Left ventricle myocardium superior (tissue), 1 donor: ENCODE measurements at regions of chr6 and their contacts with region 1.

Region 1: GRCh38 chr6:142155895-142156757 is 9.1 kb downstream of the VTA1 start:
- DNase-seq: no peak
- ATAC-seq: no peak

Region 2: GRCh38 chr6:142207265-142207877 is 51.2 kb after region 1 on chr6:
- intact Hi-C with region 1: loop called (anchors 5 kb)
- DNase-seq: peak; percentile 33
- ATAC-seq: peak; percentile 84

Region 3: GRCh38 chr6:142387997-142388815 is 232.1 kb after region 1 on chr6:
- intact Hi-C with region 1: loop called (anchors 10 kb)
- DNase-seq: no peak
- ATAC-seq: peak; percentile 40